Posterior vena cava (tissue), 2 donors: ENCODE measurements at regions of chr5 and their contacts with region 1.

Region 1: DNA sequence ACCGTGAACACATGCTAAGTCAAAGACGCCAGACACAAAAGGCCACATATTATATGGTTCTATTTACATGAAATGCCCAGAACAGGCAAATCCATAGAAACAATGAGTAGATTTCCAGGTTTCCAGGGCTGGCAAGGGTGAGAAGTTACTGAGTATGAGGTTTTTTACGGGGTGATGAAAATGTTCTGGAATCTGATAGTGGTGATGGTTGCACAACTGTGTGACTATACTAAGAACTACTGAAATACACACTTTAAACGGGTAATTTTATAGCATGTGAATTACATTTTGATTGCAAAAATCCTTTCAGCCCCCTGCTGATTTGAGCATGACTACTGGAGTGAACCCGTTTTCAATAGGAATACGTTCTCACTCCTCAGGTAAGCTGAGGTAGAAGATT is 46.7 kb upstream of the TBC1D9B start:
- DNase-seq: no peak

Region 2: GRCh38 chr5:179568721-179569120 is 385.7 kb before region 1 on chr5:
- intact Hi-C with region 1: no loop called
- DNase-seq: no peak

Region 3: DNA sequence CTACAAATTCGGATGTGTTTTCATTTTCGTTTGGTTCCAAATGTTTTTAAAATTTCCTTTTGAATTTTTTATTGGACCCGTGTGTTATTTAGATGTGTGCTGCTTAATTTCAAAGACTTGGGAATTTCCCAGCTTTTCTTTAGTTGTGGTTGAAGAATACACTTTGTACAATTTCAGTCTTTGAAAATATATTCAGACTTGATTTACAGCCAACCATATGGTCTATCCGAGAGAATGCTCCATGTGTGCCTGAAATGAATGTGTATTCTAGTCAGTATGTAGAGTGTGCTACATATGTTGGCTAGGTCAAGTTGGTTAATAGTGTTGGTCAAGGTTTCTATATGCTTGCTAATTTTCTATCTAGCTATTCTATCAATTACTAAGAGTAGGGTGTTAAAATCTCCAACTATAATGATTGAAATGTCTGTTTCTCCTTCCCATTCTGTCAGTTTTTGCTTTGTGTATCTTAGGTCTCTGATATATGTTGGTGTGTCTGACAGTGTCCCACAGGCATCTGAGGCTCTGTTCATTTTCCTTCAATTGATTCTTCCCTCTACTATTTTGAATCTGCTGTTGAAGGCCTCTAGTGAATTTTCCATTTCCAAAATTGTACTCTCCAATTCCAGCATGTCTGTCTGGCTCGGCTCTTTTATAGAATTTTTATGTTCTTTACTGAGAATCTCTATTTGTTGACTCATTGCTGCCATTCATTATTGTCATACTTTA is 80.9 kb after region 1 on chr5:
- intact Hi-C with region 1: loop called in 1 of 2 experiments (anchors 5 kb)
- DNase-seq: no peak